GM10248 (cell line): ENCODE measurements at regions of chr19 and their contacts with region 1.

Region 1: GRCh38 chr19:55503502-55504251 is 15.4 kb downstream of the SSC5D start:
- DNase-seq: peak; percentile 99
- CTCF ChIP-seq: peak; percentile 97

Region 2: DNA sequence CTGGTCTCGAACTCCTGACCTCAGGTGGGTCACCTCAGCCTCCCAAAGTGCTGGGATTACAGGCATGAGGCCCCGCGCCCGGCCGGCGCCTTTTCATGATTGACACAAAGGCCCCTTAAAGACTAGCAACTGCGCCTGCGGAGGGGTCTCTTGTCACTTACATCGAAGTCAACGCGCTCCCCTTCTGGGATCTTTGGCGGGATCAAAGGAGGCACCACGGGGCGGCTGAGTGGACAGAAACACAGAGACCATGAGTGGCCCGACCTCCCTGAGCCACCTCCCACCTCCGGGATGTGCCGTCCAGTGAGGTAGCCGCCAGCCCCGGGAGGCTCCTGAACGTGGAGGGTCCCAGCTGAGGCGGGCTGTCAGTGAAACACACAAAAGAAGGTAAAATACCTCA is 362.0 kb before region 1 on chr19:
- CTCF ChIA-PET with region 1: interaction called, 43 read pairs
- POLR2A ChIA-PET with region 1: no interaction called
- DNase-seq: no peak
- CTCF ChIP-seq: no peak

Region 3: GRCh38 chr19:55461259-55461973 is 42.3 kb before region 1 on chr19 and contains the start of gene ISOC2:
- CTCF ChIA-PET with region 1: interaction called, 59 read pairs
- POLR2A ChIA-PET with region 1: no interaction called
- DNase-seq: peak; percentile 100
- CTCF ChIP-seq: no peak

Region 4: GRCh38 chr19:55467236-55468053 is 36.2 kb before region 1 on chr19:
- CTCF ChIA-PET with region 1: interaction called, 59 read pairs
- POLR2A ChIA-PET with region 1: no interaction called
- DNase-seq: peak; percentile 85
- CTCF ChIP-seq: peak; percentile 97

Region 5: DNA sequence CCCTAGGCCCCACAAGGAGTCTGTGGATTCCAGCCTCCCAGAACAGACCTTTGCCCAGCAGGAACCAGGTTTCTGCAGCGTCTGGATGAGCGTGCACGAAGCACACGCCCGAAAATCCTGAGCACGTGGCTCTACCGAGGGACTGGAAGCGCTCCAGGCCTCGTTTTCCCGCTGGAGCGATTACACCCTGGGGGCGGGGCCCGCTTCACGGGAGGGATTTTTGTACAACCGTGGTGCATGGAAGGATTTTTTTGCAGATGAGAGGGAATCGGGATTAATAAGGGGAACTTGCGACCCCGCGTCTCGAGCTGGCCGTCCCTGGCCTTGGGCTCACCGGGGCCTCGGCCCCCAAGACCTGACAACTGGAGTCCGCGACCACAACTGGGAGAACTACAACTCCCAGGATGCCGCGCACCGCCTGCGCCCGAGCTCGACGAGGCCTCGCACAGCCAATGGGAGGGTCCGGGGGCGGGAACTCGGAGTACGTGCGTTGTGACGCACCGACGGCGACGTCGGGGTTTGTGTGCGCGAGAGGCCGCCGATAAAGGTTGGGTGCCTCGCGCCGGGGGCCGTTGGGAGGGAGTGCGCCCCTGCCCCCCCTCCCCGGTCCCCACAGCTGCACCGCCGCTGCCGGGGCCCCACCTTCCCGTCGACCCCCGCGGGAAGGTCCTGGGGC is 27.4 kb before region 1 on chr19 and contains the start of gene ZNF628:
- CTCF ChIA-PET with region 1: interaction called, 41 read pairs
- POLR2A ChIA-PET with region 1: interaction called, 3 read pairs
- DNase-seq: peak; percentile 98
- CTCF ChIP-seq: no peak

Region 6: GRCh38 chr19:55484593-55485438 is 18.9 kb before region 1 on chr19 and contains the start of gene NAT14:
- CTCF ChIA-PET with region 1: interaction called, 44 read pairs
- POLR2A ChIA-PET with region 1: no interaction called
- DNase-seq: peak; percentile 91
- CTCF ChIP-seq: no peak

Region 7: DNA sequence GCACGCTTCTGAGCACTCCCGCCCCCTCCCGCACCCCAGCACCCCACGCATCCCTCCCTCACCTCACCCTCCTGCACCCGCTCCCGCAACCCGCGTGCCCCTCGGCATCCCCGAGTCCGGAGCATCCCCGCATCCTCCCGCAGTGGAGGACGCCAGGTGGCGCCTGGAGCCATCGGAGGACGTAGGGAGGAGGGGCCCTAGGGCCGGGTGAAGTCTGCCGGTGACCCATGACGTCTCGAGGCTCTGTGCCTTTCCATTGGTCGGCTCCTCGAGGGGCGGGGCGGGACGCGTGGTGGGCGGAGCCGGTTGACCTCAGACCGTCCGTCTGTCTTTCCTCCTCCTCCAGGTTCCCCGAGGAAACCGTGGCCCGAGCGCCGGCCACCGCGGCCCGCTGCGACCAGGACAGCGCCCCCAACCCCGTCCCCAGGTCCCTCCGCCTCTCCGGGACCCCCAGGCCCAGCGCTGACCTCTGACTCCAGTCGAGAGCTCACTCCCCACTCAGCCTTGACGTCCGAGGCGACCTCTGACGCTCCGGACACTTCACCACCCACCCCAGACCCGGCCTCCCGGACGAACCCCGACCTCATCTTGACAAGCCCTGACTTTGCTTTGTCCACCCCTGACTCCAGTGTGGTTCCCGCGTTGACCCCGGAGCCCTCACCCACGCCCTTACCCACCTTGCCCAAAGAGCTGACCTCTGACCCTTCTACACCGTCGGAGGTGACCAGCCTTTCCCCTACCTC is 13.4 kb after region 1 on chr19:
- CTCF ChIA-PET with region 1: interaction called, 41 read pairs
- POLR2A ChIA-PET with region 1: no interaction called
- DNase-seq: peak; percentile 100
- CTCF ChIP-seq: peak; percentile 98